Dorsolateral prefrontal cortex (tissue), 120 donors: ENCODE measurements at regions of chr20 and their contacts with region 1.

Region 1: GRCh38 chr20:31514159-31515071 is at the start of gene HM13:
- DNase-seq: peak; percentile 84 to 93 (median 90)
- H3K4me3 ChIP-seq: peak within 1 kb of the TSS; percentile 58 to 99 (median 95)
- H3K27ac ChIP-seq: peak within 1 kb of the TSS in 50 of 59 donors; percentile 2 to 89 (median 72)
- H3K27me3 ChIP-seq: no peaks in the 10 kb centered on the region
- CTCF ChIP-seq: peak; percentile 88 to 100 (median 99)
- total RNA-seq, gene HM13: 70.0 to 134 (median 94.9) TPM

Region 2: DNA sequence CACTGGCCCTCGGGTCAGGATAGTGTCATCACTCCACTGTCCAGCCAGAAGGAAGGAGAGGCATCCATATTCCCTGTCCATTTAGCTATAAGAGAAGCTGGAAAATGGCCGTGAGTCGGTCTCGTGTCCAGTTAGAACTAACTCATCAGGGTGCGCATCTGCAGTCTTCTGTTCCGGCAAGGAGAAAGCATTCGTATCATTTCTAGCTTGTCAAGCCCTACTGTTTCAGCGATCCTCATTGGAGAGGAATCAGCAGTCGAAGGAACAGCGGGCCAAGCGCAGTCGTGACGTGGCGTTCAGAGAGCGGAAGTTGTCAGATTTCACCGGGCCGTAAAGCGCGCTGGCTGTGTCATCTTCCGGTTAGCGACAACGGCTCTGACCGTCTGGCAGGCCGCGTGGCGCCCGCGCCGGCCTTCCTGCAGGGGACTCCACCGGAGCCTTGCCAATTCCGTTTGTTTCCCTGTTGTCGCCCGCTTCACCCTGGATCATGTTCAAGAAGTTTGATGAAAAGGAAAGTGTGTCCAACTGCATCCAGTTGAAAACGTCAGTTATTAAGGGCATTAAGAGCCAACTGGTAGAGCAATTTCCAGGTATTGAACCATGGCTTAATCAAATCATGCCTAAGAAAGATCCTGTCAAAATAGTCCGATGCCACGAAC is 32.7 kb after region 1 on chr20:
- intact Hi-C with region 1: loop called in 1 of 2 experiments (anchors 5 kb)
- DNase-seq: peak; percentile 71 to 86 (median 80)
- H3K4me3 ChIP-seq: peak overlapping the region; percentile 7 to 81 (median 64)
- H3K27ac ChIP-seq: peak overlapping the region in 54 of 59 donors; percentile 15 to 93 (median 79)
- H3K27me3 ChIP-seq: no peaks in the 10 kb centered on the region
- CTCF ChIP-seq: peak in 38 of 56 donors; percentile 7 to 52 (median 26)